Esophagus squamous epithelium (tissue), 5 donors: ENCODE measurements at regions of chr14 and their contacts with region 1.

Region 1: GRCh38 chr14:36655963-36656686 is 5.5 kb upstream of the PAX9 start:
- DNase-seq: no peak
- H3K4me3 ChIP-seq: peak overlapping the region; percentile 70 to 75 (median 71)
- H3K27ac ChIP-seq: peak overlapping the region; percentile 82 to 96 (median 94)
- H3K4me1 ChIP-seq: peaks cover 3 to 62% (median 4%) of the 10 kb centered on the region in 3 donors
- H3K27me3 ChIP-seq: peaks cover 0 to 100% (median 29%) of the 10 kb centered on the region in 4 donors
- CTCF ChIP-seq: peak; percentile 27 to 87 (median 67)
- POLR2A ChIP-seq: peak in 1 of 4 donors; percentile 29

Region 2: DNA sequence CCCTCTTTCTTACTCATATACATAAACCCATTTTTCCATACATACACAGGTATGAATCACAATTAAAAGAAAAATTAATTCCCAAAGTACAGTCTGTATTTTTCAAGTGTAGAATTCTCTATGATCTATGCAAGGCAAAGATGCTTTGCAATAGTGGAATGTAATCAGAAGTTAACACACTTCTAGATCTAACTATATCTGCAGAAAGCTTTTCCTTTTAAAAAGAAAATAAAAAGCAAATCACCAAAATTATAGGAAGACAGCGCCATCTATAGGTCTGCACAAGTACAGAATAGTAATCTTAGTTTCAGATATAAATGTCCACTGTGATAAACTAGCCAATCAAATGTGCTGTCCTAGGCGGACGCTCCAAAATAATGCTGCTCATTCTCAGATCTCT is 494.3 kb after region 1 on chr14:
- intact Hi-C with region 1: loop called (anchors 10 kb)
- DNase-seq: no peak
- H3K4me3 ChIP-seq: no peak overlapping the region
- H3K27ac ChIP-seq: no peak overlapping the region
- H3K4me1 ChIP-seq: peaks cover 0 to 7% (median 0%) of the 10 kb centered on the region in 3 donors
- H3K27me3 ChIP-seq: no peaks in the 10 kb centered on the region
- CTCF ChIP-seq: peak; percentile 29 to 79 (median 68)
- POLR2A ChIP-seq: no peak